Ascending aorta (tissue), 2 donors: ENCODE measurements at regions of chr13 and their contacts with region 1.

Region 1: DNA sequence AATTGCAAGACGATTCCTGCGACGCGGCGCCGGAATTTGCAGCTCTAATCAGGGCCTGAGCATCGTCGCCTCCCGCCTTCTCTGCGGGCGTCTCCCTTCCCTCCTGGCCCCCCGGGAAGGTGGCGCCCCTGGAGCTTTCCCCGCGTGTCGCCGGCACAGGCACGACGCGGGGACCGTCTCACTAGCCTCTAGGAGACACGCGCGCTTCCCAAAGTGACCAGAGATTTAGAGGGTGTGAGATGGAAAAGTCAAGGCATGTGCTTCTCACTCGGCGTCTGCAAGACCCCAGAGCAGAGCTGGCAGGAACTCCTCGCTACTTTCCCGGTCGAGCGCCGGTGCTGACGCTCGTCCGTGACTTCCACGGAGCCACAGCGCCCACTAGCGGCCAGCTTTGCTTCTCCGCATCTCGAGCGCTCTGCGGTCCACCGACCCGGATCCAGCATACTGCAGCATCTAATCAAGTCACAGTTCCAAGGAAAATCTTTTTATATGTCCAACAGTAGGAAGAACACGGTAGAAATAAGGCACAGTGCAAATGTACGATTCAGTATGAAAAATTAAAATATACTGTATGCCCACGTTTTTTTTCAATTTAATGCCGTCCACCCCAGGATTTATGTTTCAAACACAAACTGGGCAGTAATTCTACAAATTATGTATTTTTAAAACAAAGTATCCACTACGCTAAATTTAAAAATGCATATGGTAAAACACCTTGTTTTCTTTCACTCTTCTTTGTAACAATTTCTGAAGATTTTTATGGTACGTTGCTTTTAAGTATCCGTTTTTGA is 977 bp upstream of the EFNB2 start:
- DNase-seq: peak in 1 of 2 donors; percentile 93
- H3K4me3 ChIP-seq: peak overlapping the region; percentile 79 to 98
- H3K27ac ChIP-seq: peak overlapping the region; percentile 56 to 64
- H3K4me1 ChIP-seq: no peaks in the 10 kb centered on the region
- H3K27me3 ChIP-seq: no peaks in the 10 kb centered on the region
- CTCF ChIP-seq: peak; percentile 84 to 93 (median 88)

Region 2: GRCh38 chr13:104571161-104571892 is 1965.1 kb before region 1 on chr13:
- intact Hi-C with region 1: loop called (anchors 5 kb)
- DNase-seq: peak; percentile 43 to 91
- H3K4me3 ChIP-seq: peak overlapping the region in 1 of 2 donors; percentile 45
- H3K27ac ChIP-seq: peak overlapping the region; percentile 26 to 58
- H3K4me1 ChIP-seq: peaks cover 3 to 6% of the 10 kb centered on the region in 2 donors
- H3K27me3 ChIP-seq: no peaks in the 10 kb centered on the region
- CTCF ChIP-seq: peak; percentile 47 to 79 (median 70)

Region 3: DNA sequence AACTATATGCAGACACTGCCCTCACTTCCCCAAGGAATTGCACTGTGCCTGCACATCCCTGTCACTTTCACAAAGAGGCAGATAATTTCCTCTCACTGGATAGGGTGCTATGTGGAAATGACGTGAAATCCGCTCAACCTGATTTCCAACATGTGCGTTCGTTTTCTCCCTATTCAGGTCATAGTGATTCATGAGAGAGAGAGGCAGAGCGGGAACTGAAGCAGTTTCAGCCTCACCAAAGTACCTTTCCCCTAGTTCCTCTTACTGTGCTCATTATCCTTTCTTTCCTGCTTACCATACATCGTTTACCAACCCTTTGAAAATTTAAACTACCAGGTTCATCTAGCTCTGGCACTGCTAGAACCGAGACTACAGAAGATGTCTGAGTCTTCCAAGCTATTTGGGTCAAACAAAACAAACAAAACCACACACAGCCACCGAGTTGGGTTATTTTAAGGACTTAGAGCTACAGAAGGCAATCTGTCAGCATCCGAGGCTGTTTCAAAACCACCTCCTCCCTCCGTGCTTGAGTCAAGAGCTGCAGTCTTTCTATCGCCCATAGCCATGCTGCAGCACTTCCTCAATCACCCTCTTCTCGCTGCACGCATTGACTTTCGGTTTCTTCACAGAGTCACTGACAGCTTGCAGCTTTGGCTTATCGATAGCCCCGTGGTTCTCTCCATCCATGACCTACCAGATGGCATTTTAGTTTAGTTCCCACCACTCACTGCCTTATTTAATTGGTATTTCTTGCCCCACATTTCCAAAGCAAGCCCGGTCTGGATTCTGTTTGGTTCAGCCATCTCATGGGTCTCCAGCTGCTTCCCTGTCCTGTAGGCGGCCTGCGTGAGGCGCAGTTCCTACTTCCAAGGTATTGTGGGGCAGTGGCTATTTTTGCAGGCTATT is 1396.8 kb before region 1 on chr13:
- intact Hi-C with region 1: loop called (anchors 5 kb)
- DNase-seq: peak in 1 of 2 donors; percentile 78
- H3K4me3 ChIP-seq: peak overlapping the region; percentile 48 to 70
- H3K27ac ChIP-seq: peak overlapping the region; percentile 52 to 65
- H3K4me1 ChIP-seq: no peaks in the 10 kb centered on the region
- H3K27me3 ChIP-seq: no peaks in the 10 kb centered on the region
- CTCF ChIP-seq: peak; percentile 32 to 61 (median 38)

Region 4: GRCh38 chr13:105442941-105443340 is 1093.5 kb before region 1 on chr13:
- intact Hi-C with region 1: loop called (anchors 10 kb)
- DNase-seq: no peak
- H3K4me3 ChIP-seq: no peak overlapping the region
- H3K27ac ChIP-seq: peak overlapping the region in 1 of 2 donors; percentile 48
- H3K4me1 ChIP-seq: no peaks in the 10 kb centered on the region
- H3K27me3 ChIP-seq: no peaks in the 10 kb centered on the region
- CTCF ChIP-seq: no peak

Region 5: DNA sequence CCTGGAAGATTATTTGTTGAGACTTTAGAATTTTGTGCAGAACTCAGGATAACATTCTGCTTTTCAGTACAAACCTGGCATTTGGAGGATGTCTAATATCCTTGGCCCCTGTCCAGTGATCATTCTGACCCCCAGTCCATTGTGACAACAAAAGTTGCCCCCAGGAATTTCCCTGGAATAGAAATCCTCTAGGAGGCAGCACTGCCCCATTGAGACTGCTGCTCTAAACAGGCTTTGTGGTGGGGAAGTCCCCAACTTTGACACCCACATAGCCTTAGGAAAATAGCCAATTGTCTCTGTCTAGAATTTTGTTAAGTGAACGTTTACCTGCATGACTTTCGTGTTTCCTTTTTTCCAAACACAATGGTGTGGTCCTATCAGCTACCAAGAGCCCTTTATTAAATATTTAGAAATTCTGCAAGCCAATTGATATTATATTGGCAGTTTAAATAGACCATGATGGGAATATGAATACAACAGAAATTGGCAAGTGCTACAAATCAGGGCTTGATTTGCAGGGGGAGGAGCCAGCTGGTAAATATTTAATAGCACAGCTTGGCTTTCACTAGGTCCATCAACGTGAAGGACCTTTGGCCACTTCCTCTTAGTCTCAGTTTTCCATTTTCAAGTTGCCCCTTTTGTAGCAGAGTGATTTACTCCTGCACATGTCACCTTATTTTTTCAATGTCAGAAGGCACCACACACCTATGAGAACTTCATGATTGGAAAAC is 452.7 kb before region 1 on chr13:
- intact Hi-C with region 1: loop called (anchors 5 kb)
- DNase-seq: no peak
- H3K4me3 ChIP-seq: no peak overlapping the region
- H3K27ac ChIP-seq: no peak overlapping the region
- H3K4me1 ChIP-seq: no peaks in the 10 kb centered on the region
- H3K27me3 ChIP-seq: no peaks in the 10 kb centered on the region
- CTCF ChIP-seq: peak in 2 of 3 experiments; percentile 9 to 49

Region 6: GRCh38 chr13:106619688-106620555 is 83.5 kb after region 1 on chr13:
- intact Hi-C with region 1: loop called (anchors 2 kb)
- DNase-seq: no peak
- H3K4me3 ChIP-seq: no peak overlapping the region
- H3K27ac ChIP-seq: no peak overlapping the region
- H3K4me1 ChIP-seq: no peaks in the 10 kb centered on the region
- H3K27me3 ChIP-seq: no peaks in the 10 kb centered on the region
- CTCF ChIP-seq: peak; percentile 47 to 76 (median 69)

Region 7: DNA sequence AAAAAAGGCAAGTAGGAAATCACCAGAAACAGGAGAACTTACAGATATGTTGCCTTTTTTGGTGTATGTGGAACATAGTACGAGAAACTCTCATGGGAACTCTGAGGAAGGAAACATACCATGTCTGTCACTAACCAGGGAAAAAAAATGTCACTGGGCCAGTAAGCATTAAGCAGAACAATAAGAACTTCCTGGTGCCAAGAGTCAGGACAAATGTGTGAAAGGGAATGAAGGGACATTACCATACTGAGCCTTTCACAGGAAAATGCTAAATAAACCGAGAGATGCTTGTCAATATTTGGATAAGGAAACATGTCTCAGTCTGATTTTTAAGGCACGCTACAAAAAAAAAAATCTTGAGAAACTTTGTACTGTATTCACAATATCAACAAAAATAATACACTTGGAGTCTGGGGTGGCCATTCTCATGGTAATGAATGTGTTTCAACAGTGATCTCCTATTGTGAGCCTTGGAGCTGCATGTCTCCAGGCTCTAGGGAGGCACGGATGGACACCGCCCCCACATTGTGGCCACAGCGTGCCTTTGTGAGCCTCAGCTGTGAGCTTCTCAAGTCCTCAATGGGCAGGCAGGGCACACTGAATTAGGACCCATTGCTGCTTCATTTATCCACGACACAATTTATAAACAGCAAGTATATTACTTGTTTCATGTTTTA is 144.5 kb after region 1 on chr13:
- intact Hi-C with region 1: no loop called
- DNase-seq: no peak
- H3K4me3 ChIP-seq: no peak overlapping the region
- H3K27ac ChIP-seq: no peak overlapping the region
- H3K4me1 ChIP-seq: no peaks in the 10 kb centered on the region
- H3K27me3 ChIP-seq: no peaks in the 10 kb centered on the region
- CTCF ChIP-seq: no peak

Region 8: DNA sequence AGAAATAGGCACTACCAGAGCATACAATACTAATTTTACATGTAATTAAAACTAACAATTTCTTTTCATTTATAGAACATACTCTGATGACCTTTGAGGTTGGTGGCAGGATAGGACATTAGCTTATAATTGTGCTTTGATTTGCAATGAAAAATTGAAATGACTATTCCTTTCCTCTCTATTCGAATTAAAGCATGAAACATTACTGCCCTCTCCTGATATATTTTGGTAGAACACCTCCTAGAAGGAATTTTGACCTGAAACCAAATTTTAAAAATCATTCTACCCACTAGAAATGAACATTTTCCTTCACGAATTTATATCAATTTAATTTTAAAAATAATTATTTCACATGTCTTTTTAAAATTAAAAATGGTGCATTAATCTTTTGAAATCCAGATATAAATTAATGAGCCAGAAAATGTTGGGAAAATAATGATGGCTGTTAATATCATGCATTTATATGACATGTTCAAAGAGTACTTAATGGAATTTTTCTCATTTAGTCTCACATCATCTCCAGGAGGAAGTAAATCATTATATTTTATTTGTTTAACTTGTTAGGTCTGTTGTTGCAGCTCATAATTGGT is 587.8 kb after region 1 on chr13:
- intact Hi-C with region 1: loop called (anchors 2 kb)
- DNase-seq: no peak
- H3K4me3 ChIP-seq: no peak overlapping the region
- H3K27ac ChIP-seq: no peak overlapping the region
- H3K4me1 ChIP-seq: no peaks in the 10 kb centered on the region
- H3K27me3 ChIP-seq: no peaks in the 10 kb centered on the region
- CTCF ChIP-seq: peak; percentile 52 to 75 (median 64)